OCI-LY7 (cell line): ENCODE measurements at regions of chr19 and their contacts with region 1.

Region 1: GRCh38 chr19:5031231-5032100 is 62.6 kb downstream of the KDM4B start:
- DNase-seq: peak; percentile 79
- H3K4me3 ChIP-seq: no peak overlapping the region
- H3K27ac ChIP-seq: no peak overlapping the region
- H3K4me1 ChIP-seq: peaks cover 7% of the 10 kb centered on the region
- CTCF ChIP-seq: peak; percentile 92

Region 2: GRCh38 chr19:4723367-4724187 is 307.9 kb before region 1 on chr19 and contains the start of gene DPP9:
- CTCF ChIA-PET with region 1: no interaction called
- POLR2A ChIA-PET with region 1: interaction called, 3 read pairs
- intact Hi-C with region 1: loop called (anchors 10 kb)
- DNase-seq: peak; percentile 100
- H3K4me3 ChIP-seq: peak within 1 kb of the TSS; percentile 100
- H3K27ac ChIP-seq: peak within 1 kb of the TSS; percentile 72
- H3K4me1 ChIP-seq: peaks cover 12% of the 10 kb centered on the region
- CTCF ChIP-seq: no peak
- total RNA-seq, gene DPP9: 25.5 and 40.2 TPM in 2 replicates

Region 3: GRCh38 chr19:4815426-4816201 is 215.9 kb before region 1 on chr19:
- CTCF ChIA-PET with region 1: interaction called, 3 read pairs
- POLR2A ChIA-PET with region 1: interaction called, 3 read pairs
- intact Hi-C with region 1: loop called (anchors 1 kb)
- DNase-seq: peak; percentile 91
- H3K4me3 ChIP-seq: no peak overlapping the region
- H3K27ac ChIP-seq: no peak overlapping the region
- H3K4me1 ChIP-seq: peaks cover 24% of the 10 kb centered on the region
- CTCF ChIP-seq: no peak

Region 4: DNA sequence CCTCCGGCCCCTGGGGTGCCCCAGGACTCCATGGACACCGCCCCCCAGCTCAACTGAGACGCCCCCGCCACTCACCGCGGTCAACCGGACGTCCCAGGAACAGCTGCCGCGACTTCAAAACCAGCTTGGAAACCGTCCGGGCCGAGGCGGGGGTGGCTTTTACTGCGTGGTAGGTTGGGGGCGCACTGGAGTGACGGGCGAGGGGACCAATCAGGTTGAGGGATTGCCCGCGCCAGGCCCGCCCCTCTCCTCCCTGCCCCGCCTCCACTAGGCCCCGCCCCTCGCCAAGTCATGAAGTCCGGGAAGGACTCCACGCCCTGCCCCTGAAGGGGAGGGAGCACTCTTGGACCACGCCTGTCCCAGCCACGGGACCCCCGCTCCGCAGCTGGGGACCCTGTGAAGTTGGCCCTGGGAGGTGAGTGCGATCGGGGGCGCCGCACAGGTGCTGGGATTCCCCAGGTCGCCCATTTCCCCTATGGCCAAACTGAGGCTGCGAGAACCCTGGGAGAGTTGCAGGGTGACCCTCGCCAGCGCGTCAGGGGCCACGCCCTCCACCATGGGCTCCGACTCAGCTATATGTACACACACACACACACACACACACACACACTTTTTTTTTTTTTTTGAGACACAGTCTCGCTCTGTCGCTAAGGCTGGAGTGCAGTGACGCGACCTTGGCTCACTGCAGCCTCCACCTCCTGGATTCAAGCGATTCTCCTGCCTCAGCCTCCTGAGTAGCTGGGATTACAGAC is 163.8 kb before region 1 on chr19 and contains the start of gene PLIN3:
- CTCF ChIA-PET with region 1: no interaction called
- POLR2A ChIA-PET with region 1: no interaction called
- intact Hi-C with region 1: loop called (anchors 1 kb)
- DNase-seq: peak; percentile 95
- H3K4me3 ChIP-seq: peak within 1 kb of the TSS; percentile 78
- H3K27ac ChIP-seq: peak within 1 kb of the TSS; percentile 63
- H3K4me1 ChIP-seq: peaks cover 51% of the 10 kb centered on the region
- CTCF ChIP-seq: no peak
- total RNA-seq, gene PLIN3: 81.3 and 95.7 TPM in 2 replicates

Region 5: DNA sequence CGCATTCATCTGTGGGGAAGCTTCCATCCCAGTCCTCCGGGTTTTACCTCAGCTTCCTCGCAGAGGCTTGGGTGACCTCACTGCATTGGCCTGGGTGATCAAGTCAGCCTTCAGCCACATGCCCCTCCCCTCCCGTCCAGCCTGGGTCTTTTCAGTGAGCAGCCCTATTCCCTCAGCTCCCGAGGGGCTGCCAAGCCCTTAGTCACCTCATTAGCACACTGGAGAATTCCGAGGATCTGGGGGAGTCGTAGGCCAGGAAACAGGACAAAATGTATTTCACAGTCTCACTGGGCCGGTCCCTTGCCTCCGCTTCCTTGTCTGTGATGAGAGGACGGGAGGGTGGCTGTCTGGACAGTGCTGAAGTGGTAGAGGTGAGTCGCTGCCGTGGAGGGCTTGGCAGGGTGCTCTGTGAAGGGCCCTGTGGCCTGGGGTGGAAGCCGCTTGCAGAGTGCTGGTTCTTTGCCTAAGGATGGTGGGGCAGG is 42.7 kb before region 1 on chr19:
- CTCF ChIA-PET with region 1: no interaction called
- POLR2A ChIA-PET with region 1: no interaction called
- intact Hi-C with region 1: no loop called
- DNase-seq: no peak
- H3K4me3 ChIP-seq: no peak overlapping the region
- H3K27ac ChIP-seq: no peak overlapping the region
- H3K4me1 ChIP-seq: no peaks in the 10 kb centered on the region
- CTCF ChIP-seq: no peak

Region 6: DNA sequence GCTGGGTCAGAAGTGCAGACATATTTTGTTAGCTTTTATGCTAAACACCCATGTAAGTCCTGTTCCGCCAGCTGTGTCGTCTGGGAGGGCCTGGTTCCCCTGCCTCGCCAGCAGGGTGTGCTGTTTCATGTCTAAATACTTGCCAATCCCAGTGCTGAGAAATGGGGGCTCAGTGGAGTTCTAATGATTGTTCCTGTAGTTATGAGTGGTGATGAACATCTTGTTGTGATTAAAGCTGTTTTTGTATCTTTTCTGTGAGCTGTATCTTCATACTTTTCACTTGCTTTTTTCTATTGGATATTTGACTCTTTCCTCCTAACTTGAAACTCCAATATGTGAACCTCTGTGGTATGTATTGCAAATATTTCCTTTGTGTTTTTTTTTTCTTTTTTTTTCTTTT is 29.9 kb before region 1 on chr19:
- CTCF ChIA-PET with region 1: no interaction called
- POLR2A ChIA-PET with region 1: no interaction called
- intact Hi-C with region 1: loop called (anchors 1 kb)
- DNase-seq: peak; percentile 55
- H3K4me3 ChIP-seq: no peak overlapping the region
- H3K27ac ChIP-seq: no peak overlapping the region
- H3K4me1 ChIP-seq: no peaks in the 10 kb centered on the region
- CTCF ChIP-seq: peak; percentile 90

Region 7: GRCh38 chr19:5103061-5103701 is 71.7 kb after region 1 on chr19:
- CTCF ChIA-PET with region 1: no interaction called
- POLR2A ChIA-PET with region 1: no interaction called
- intact Hi-C with region 1: no loop called
- DNase-seq: no peak
- H3K4me3 ChIP-seq: no peak overlapping the region
- H3K27ac ChIP-seq: no peak overlapping the region
- H3K4me1 ChIP-seq: no peaks in the 10 kb centered on the region
- CTCF ChIP-seq: no peak